ENCODE measurements at regions of chr1 and their contacts with region 1.

Region 1: GRCh38 chr1:12153181-12153785 is 13.5 kb upstream of the TNFRSF1B start:
- DNase-seq: peak in 1 of 10 donors; percentile 41
- ATAC-seq: no peak
- H3K4me3 Mint-ChIP-seq: peak overlapping the region in 6 of 10 donors; percentile 20 to 64 (median 50)
- H3K27ac Mint-ChIP-seq: peak overlapping the region; percentile 17 to 98 (median 84)
- H3K4me1 Mint-ChIP-seq: peaks cover 47 to 85% (median 77%) of the 10 kb centered on the region in 4 donors
- H3K27me3 Mint-ChIP-seq: no peaks in the 10 kb centered on the region

Region 2: GRCh38 chr1:12124693-12125421 is 28.4 kb before region 1 on chr1:
- POLR2A ChIA-PET with region 1: interaction called, 14 read pairs
- DNase-seq: peak; percentile 60 to 94 (median 76)
- ATAC-seq: peak; percentile 44 to 67
- H3K4me3 Mint-ChIP-seq: peak overlapping the region in 5 of 10 donors; percentile 2 to 67 (median 34)
- H3K27ac Mint-ChIP-seq: peak overlapping the region in 8 of 10 donors; percentile 14 to 75 (median 48)
- H3K4me1 Mint-ChIP-seq: peaks cover 23 to 45% (median 40%) of the 10 kb centered on the region in 4 donors
- H3K27me3 Mint-ChIP-seq: peaks cover 0 to 19% (median 3%) of the 10 kb centered on the region in 5 donors

Region 3: GRCh38 chr1:12132092-12132491 is 21.2 kb before region 1 on chr1:
- POLR2A ChIA-PET with region 1: interaction called, 67 read pairs
- DNase-seq: no peak
- ATAC-seq: no peak
- H3K4me3 Mint-ChIP-seq: peak overlapping the region in 5 of 10 donors; percentile 6 to 26 (median 10)
- H3K27ac Mint-ChIP-seq: peak overlapping the region; percentile 49 to 95 (median 91)
- H3K4me1 Mint-ChIP-seq: peaks cover 9 to 34% (median 28%) of the 10 kb centered on the region in 4 donors
- H3K27me3 Mint-ChIP-seq: no peaks in the 10 kb centered on the region

Region 4: GRCh38 chr1:12166834-12167492 is 13.7 kb after region 1 on chr1 and contains the start of gene TNFRSF1B:
- POLR2A ChIA-PET with region 1: interaction called, 119 read pairs
- DNase-seq: peak in 8 of 10 donors; percentile 30 to 74 (median 52)
- ATAC-seq: peak; percentile 71 to 73
- H3K4me3 Mint-ChIP-seq: peak within 1 kb of the TSS; percentile 94 to 100 (median 97)
- H3K27ac Mint-ChIP-seq: peak within 1 kb of the TSS; percentile 93 to 98 (median 97)
- H3K4me1 Mint-ChIP-seq: peaks cover 29 to 77% (median 66%) of the 10 kb centered on the region in 4 donors
- H3K27me3 Mint-ChIP-seq: no peaks in the 10 kb centered on the region
- polyA plus RNA-seq, gene TNFRSF1B: 19.7 to 64.6 (median 21.8) TPM

Region 5: DNA sequence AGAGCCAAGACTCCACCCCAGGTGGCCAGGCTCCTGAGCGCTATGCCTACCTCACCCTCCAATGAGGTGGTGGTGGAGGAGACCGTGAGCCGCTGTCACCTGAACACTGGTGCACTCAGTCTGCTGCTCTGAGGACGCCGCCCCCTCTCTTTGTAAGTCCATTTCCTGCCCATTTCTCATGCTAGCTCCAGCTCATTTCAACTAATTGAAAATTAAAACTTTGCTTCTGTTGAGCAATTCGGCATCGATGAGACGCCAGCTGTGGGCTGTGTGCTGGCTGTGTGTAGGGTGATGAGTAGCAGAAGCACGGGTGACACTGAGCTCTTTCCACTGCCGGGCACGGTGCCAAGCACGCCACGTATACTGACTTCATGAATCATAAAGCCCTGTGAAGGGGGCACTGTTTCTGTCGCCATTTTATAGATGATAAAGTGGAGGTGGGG is 24.7 kb after region 1 on chr1:
- POLR2A ChIA-PET with region 1: interaction called, 119 read pairs
- DNase-seq: peak; percentile 81 to 95 (median 86)
- ATAC-seq: peak; percentile 63 to 71
- H3K4me3 Mint-ChIP-seq: peak overlapping the region; percentile 77 to 95 (median 84)
- H3K27ac Mint-ChIP-seq: peak overlapping the region; percentile 95 to 100 (median 98)
- H3K4me1 Mint-ChIP-seq: peaks cover 47 to 95% (median 79%) of the 10 kb centered on the region in 4 donors
- H3K27me3 Mint-ChIP-seq: peaks cover 0 to 2% (median 0%) of the 10 kb centered on the region in 5 donors

Region 6: DNA sequence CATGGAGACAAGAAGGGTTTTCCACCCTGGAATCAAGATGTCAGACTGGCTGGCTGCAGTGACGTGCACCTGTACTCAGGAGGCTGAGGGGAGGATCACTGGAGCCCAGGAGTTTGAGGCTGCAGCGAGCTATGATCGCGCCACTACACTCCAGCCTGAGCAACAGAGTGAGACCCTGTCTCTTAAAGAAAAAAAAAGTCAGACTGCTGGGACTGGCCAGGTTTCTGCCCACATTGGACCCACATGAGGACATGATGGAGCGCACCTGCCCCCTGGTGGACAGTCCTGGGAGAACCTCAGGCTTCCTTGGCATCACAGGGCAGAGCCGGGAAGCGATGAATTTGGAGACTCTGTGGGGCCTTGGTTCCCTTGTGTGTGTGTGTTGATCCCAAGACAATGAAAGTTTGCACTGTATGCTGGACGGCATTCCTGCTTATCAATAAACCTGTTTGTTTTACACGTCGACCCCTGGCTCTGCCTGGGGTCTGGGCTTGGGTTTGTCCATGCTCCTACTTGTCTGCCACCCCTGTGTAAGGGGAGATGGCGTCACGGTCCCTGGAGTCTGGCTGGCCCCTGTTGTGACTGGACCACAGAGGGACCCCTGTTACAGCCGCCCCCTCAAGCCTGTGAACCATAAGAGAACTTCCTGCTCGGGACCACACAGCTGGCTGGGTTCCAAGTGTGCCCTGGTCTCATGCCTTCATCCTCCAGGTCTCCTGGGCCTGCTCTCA is 55.6 kb after region 1 on chr1:
- POLR2A ChIA-PET with region 1: interaction called, 23 read pairs
- DNase-seq: peak; percentile 70 to 90 (median 82)
- ATAC-seq: peak; percentile 75 to 77
- H3K4me3 Mint-ChIP-seq: peak overlapping the region in 8 of 10 donors; percentile 28 to 66 (median 55)
- H3K27ac Mint-ChIP-seq: peak overlapping the region in 9 of 10 donors; percentile 56 to 90 (median 84)
- H3K4me1 Mint-ChIP-seq: peaks cover 16 to 57% (median 54%) of the 10 kb centered on the region in 4 donors
- H3K27me3 Mint-ChIP-seq: no peaks in the 10 kb centered on the region